T-cell (primary cell): ENCODE measurements at regions of chr2 and their contacts with region 1.

Region 1: GRCh38 chr2:54471221-54471711 is 15.1 kb downstream of the SPTBN1 start:
- DNase-seq: no peak
- ATAC-seq: no peak
- H3K4me3 ChIP-seq: no peak overlapping the region
- H3K4me3 Mint-ChIP-seq: no peak overlapping the region
- H3K27ac ChIP-seq: no peak overlapping the region
- H3K27ac Mint-ChIP-seq: no peak overlapping the region
- H3K4me1 ChIP-seq: peaks cover 0 to 2% of the 10 kb centered on the region in 2 experiments
- H3K4me1 Mint-ChIP-seq: no peaks in the 10 kb centered on the region
- H3K27me3 ChIP-seq: peaks cover 0 to 3% of the 10 kb centered on the region in 2 experiments
- H3K27me3 Mint-ChIP-seq: no peaks in the 10 kb centered on the region

Region 2: GRCh38 chr2:54528311-54528945 is 57.2 kb after region 1 on chr2:
- CTCF ChIA-PET with region 1: interaction called in 1 of 2 experiments, 11 read pairs
- POLR2A ChIA-PET with region 1: no interaction called
- DNase-seq: no peak
- ATAC-seq: no peak
- H3K4me3 ChIP-seq: no peak overlapping the region
- H3K4me3 Mint-ChIP-seq: no peak overlapping the region
- H3K27ac ChIP-seq: no peak overlapping the region
- H3K27ac Mint-ChIP-seq: no peak overlapping the region
- H3K4me1 ChIP-seq: no peaks in the 10 kb centered on the region
- H3K4me1 Mint-ChIP-seq: peaks cover 7 to 14% (median 9%) of the 10 kb centered on the region in 3 donors
- H3K27me3 ChIP-seq: no peaks in the 10 kb centered on the region
- H3K27me3 Mint-ChIP-seq: no peaks in the 10 kb centered on the region